SK-N-SH (cell line): ENCODE measurements at regions of chr2 and their contacts with region 1.

Region 1: GRCh38 chr2:231297108-231297908 is 98.2 kb upstream of the B3GNT7 start:
- DNase-seq: peak; percentile 87
- H3K4me3 ChIP-seq: no peak overlapping the region; a peak in 1 of 4 replicates
- H3K27ac ChIP-seq: no peak overlapping the region; a peak in 1 of 4 replicates
- H3K4me1 ChIP-seq: no peaks in the 10 kb centered on the region; a peak in 1 of 4 replicates
- H3K27me3 ChIP-seq: no peaks in the 10 kb centered on the region
- CTCF ChIP-seq: peak; percentile 73
- EP300 ChIP-seq: no peak
- RAD21 ChIP-seq: peak; percentile 80

Region 2: DNA sequence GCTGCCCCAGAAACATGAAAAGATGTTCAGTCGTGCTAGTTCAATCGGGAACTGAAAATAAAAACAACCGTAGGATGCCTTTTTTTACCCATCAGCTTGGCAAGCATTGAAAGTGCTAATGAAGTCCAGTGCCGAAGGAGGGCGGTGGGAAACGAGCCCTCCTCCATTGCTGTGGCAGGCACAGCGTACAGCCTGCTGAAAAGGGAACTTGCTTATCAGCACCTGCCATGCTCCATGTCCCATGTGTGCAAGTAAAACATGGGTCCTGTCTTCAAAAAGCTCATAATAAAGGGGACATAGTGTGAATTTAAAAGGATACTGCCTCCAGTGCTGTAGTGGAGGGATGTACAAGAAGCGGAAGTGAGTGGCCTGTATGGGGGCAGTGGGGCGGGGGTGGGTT is 16.5 kb before region 1 on chr2:
- CTCF ChIA-PET with region 1: interaction called, 20 read pairs
- POLR2A ChIA-PET with region 1: no interaction called
- DNase-seq: no peak
- H3K4me3 ChIP-seq: no peak overlapping the region
- H3K27ac ChIP-seq: no peak overlapping the region
- H3K4me1 ChIP-seq: no peaks in the 10 kb centered on the region
- H3K27me3 ChIP-seq: no peaks in the 10 kb centered on the region
- CTCF ChIP-seq: no peak
- EP300 ChIP-seq: no peak
- RAD21 ChIP-seq: no peak

Region 3: DNA sequence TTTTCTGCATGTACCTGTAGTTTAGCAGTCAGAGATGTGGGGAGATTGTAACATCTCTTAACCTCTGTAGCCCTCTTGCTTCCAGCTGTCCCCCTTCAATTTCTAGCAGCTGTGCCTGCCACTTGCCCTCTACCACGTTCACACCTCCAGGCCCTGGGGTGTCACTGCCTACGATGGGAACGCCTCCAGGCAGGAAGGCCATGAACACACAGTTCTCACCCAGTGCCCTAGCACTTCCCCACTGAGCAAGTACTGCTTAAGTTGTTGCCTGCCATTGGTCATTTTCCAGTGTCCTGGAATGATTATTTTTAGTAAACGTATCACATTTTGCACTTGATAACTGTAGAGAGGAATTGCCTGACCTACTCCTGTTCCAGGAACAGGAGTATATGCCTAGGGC is 21.1 kb after region 1 on chr2:
- CTCF ChIA-PET with region 1: interaction called, 12 read pairs
- POLR2A ChIA-PET with region 1: no interaction called
- DNase-seq: no peak
- H3K4me3 ChIP-seq: no peak overlapping the region
- H3K27ac ChIP-seq: no peak overlapping the region
- H3K4me1 ChIP-seq: no peaks in the 10 kb centered on the region; a peak in 1 of 4 replicates
- H3K27me3 ChIP-seq: no peaks in the 10 kb centered on the region
- CTCF ChIP-seq: no peak
- EP300 ChIP-seq: no peak
- RAD21 ChIP-seq: no peak

Region 4: DNA sequence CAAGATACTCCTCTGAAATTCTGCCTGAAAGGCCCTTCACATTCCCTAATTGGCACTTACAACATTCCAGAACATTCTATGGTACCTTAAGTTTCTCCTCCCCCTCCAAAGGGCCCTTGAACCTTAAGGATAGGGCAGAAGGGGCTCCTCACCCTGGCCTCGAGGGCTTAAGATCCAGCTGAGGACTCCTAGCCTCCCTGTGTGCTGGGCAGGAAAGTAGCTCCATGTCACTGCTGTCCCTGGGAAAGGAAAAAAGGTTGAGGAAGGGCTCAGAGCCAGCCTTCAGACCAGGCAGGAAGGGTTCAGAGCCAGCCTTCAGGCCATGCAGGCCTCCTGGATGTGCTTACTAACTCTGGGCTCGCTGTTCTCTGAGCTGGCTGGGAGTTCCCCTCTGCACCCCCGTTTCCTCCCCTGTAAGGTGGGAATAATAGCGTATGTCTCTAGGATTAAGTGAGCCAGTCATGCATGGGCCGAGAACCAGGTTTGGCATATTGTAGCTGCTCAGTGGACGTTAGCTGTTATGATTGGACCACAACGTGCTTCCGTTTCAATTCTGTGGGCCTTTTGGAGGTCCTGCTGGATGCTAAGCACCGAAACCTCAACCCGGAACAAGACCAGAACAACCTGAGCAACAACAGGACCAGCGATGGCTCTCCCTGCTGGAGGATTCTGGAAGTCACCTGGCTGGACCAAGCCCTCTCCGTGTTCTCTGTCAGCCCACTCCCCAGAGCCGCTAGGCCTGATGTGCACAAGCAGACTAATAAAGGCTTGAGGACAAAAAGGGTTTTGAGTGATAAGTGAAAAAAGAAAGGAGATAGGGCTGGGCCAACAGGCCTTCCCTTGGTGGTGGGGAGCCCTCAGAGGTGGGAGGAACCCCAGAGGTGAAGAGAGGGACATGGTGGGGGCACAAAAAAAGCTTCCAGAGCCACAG is 97.2 kb after region 1 on chr2:
- CTCF ChIA-PET with region 1: interaction called, 45 read pairs
- POLR2A ChIA-PET with region 1: no interaction called
- DNase-seq: peak; percentile 57
- H3K4me3 ChIP-seq: no peak overlapping the region
- H3K27ac ChIP-seq: no peak overlapping the region
- H3K4me1 ChIP-seq: peaks cover 0 to 32% of the 10 kb centered on the region in 2 experiments; a peak in 1 of 4 replicates
- H3K27me3 ChIP-seq: no peaks in the 10 kb centered on the region
- CTCF ChIP-seq: no peak; the same call in 1 of the 2 replicates
- EP300 ChIP-seq: no peak
- RAD21 ChIP-seq: 0 out of 2 replicates have a peak, but pooled peaks have one; percentile 9

Region 5: DNA sequence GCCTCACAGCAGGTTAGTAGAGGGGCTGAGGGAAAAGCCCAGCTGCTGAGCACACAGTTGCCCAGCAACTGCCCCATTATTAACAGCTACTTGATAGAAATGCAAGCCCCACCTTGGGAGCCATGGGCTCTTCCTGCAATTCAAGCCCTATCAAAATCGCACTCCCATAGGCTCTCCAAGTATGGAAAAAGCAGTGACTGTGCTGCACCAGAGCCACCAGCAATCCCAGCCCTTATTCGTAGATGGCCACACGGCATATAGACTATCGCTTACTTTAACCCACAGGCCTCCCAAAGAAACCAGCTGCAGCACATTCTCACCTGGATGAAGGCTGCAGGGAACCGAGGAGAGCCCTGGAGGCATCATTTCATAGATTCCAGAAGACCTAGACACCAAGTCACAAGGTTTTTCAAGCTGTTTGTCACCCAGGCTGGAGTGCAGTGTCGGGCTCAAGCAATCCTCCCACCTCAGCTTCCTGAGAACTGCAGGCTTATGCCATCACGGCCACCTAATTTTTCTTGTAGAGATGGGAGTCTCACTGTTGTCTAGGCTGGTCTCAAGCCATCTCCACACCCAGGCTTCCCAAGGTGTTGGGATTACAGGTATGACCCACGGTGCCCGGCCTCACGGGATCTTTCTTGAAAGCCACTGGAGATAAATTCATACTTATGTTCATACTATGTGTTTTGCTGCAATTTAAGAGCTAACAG is 155.6 kb after region 1 on chr2:
- CTCF ChIA-PET with region 1: interaction called, 24 read pairs
- POLR2A ChIA-PET with region 1: no interaction called
- DNase-seq: no peak
- H3K4me3 ChIP-seq: no peak overlapping the region
- H3K27ac ChIP-seq: no peak overlapping the region
- H3K4me1 ChIP-seq: no peaks in the 10 kb centered on the region
- H3K27me3 ChIP-seq: no peaks in the 10 kb centered on the region
- CTCF ChIP-seq: no peak
- EP300 ChIP-seq: no peak
- RAD21 ChIP-seq: no peak